Head of caudate nucleus (tissue), 42 donors: ENCODE measurements at regions of chr1 and their contacts with region 1.

Region 1: GRCh38 chr1:243255791-243256512 is at the start of gene SDCCAG8:
- DNase-seq: peak; percentile 96 to 100 (median 99)

Region 2: GRCh38 chr1:243316366-243316989 is 60.5 kb after region 1 on chr1:
- intact Hi-C with region 1: loop called (anchors 2 kb)
- DNase-seq: peak; percentile 70 to 93 (median 87)